Activated naive CD4-positive, alpha-beta T cell treated with anti-CD3 and anti-CD28 coated beads, Interleukin-2, amount 10 ng/mL, durations not matched to agents 7 days and 5 days (primary cell): ENCODE measurements at regions of chr12 and their contacts with region 1.

Region 1: GRCh38 chr12:54853995-54854566 is at the start of gene MUCL1:
- DNase-seq: peak; percentile 81
- H3K4me3 Mint-ChIP-seq: no peak within 1 kb of the TSS
- H3K27ac Mint-ChIP-seq: no peak within 1 kb of the TSS
- H3K4me1 Mint-ChIP-seq: peaks cover 3% of the 10 kb centered on the region
- H3K27me3 Mint-ChIP-seq: peaks cover 7% of the 10 kb centered on the region

Region 2: DNA sequence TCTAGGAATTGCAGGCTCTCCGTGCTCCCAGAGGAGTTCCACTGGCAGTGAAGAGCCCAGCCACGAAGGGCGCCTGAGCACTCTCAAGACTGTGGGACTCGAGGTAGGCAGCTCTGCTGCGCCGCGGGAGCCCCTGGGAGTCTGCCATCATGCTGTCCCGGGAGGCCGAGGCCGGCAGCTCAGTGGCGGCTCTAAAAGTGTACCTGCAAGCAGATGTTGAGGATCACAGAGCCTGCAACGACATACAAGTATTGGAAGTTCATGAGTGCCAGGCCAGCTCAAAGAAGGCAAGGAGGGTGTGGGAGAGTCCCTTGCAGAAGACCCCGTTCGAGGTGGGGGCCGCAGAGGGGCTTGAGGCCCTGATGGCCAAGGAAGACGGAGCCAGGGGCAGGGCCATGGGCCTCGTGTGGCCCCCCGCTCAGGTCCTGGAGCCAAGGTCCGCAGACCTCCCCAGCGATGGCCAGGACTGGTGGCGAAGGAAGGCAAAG is 63.0 kb after region 1 on chr12:
- CTCF ChIA-PET with region 1: no interaction called
- DNase-seq: no peak
- H3K4me3 Mint-ChIP-seq: no peak overlapping the region
- H3K27ac Mint-ChIP-seq: no peak overlapping the region
- H3K4me1 Mint-ChIP-seq: no peaks in the 10 kb centered on the region
- H3K27me3 Mint-ChIP-seq: no peaks in the 10 kb centered on the region

Region 3: DNA sequence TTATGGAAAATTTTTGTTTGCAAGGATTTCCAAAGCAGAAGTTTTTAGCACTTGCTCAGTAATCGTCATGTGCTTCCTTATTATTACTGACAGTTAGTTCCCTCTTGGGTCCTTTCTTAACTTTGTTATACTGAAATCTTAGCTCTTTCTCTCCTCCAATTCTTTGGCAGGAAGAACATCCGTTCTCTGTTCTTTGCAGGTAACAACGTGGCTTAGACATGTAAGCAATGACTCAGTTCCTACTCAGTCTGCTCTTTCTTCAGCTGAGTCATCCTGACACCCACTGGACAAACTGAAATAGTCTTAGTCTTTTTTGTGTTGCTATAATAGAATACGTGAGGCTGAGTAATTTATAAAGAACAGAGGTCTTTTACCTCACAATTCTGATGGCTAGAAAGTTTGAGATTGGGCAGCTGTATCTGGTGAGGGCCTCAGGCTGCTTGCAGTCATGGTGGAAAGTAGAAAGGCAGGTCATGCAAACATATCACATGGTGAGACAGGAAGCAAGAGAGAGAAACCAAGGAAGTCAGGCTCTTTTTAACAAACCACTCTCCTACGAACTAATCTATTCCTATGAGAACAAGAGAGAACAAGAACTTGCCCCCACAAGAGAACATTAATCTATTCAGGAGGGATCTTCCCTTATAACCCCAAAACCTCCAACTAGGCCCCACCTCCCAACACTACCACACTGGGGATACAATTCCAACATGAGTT is 81.3 kb after region 1 on chr12:
- CTCF ChIA-PET with region 1: interaction called, 15 read pairs
- DNase-seq: peak; percentile 28
- H3K4me3 Mint-ChIP-seq: peak overlapping the region; percentile 39
- H3K27ac Mint-ChIP-seq: peak overlapping the region; percentile 97
- H3K4me1 Mint-ChIP-seq: peaks cover 59% of the 10 kb centered on the region
- H3K27me3 Mint-ChIP-seq: no peaks in the 10 kb centered on the region

Region 4: GRCh38 chr12:54958048-54958658 is 104.1 kb after region 1 on chr12:
- CTCF ChIA-PET with region 1: interaction called, 39 read pairs
- DNase-seq: peak; percentile 65
- H3K4me3 Mint-ChIP-seq: no peak overlapping the region
- H3K27ac Mint-ChIP-seq: no peak overlapping the region
- H3K4me1 Mint-ChIP-seq: peaks cover 73% of the 10 kb centered on the region
- H3K27me3 Mint-ChIP-seq: no peaks in the 10 kb centered on the region